ENCODE measurements at regions of chr11 and their contacts with region 1.

Region 1: DNA sequence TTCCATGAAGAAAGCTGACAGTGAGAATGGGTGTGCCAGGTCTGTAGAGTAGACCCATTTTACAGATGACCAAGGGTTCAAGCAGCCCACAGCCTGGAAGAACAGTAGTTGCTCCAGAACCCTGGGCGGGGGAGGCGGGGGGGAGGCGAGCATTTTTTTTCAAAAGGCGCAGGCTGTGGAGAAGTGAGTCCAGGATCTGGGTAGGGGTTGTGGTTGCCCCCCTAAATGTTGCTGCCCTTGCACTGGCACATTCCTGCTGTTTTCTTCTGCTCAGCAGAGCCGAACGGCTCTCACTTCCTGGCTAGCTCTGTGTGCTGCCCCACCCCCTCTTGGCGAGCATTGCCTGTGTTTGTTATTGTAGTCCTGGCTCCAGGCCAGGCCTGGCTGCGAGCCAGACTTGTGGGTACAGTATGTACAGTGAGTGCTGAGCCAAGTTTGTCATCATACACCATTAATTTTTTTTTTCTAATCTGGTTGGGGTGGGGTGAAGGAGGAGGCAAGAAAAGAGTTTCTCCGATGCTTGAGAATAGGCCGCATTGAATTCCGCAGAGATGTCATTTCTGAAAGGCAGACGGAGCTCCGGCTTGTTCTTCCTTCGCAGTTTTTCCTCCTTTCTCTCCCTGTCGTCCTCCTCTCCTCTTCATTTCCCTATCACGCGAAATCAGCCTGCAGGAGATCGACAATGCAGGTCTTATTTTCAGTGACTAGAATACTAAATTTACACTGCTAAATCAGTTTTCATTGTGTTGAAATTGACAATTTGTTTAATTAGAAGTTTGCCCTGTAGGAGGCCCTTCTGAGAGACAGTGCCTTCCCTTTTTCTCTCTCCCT is 100.5 kb downstream of the ZBTB16 start:
- DNase-seq: peak; percentile 100
- H3K4me3 ChIP-seq: peak overlapping the region; percentile 32 to 49 (median 42)
- H3K27ac ChIP-seq: peak overlapping the region; percentile 97 to 100 (median 98)
- H3K4me1 ChIP-seq: peaks cover 91 to 97% (median 96%) of the 10 kb centered on the region in 4 donors
- H3K27me3 ChIP-seq: no peaks in the 10 kb centered on the region
- CTCF ChIP-seq: no peak
- EP300 ChIP-seq: peak; percentile 99
- POLR2A ChIP-seq: no peak

Region 2: GRCh38 chr11:114110952-114111947 is 48.8 kb before region 1 on chr11:
- intact Hi-C with region 1: no loop called
- DNase-seq: no peak
- H3K4me3 ChIP-seq: peak overlapping the region in 2 of 4 donors; percentile 6
- H3K27ac ChIP-seq: peak overlapping the region; percentile 46 to 63 (median 55)
- H3K4me1 ChIP-seq: peaks cover 97 to 100% (median 99%) of the 10 kb centered on the region in 4 donors
- H3K27me3 ChIP-seq: no peaks in the 10 kb centered on the region
- CTCF ChIP-seq: no peak
- EP300 ChIP-seq: no peak
- POLR2A ChIP-seq: no peak

Region 3: DNA sequence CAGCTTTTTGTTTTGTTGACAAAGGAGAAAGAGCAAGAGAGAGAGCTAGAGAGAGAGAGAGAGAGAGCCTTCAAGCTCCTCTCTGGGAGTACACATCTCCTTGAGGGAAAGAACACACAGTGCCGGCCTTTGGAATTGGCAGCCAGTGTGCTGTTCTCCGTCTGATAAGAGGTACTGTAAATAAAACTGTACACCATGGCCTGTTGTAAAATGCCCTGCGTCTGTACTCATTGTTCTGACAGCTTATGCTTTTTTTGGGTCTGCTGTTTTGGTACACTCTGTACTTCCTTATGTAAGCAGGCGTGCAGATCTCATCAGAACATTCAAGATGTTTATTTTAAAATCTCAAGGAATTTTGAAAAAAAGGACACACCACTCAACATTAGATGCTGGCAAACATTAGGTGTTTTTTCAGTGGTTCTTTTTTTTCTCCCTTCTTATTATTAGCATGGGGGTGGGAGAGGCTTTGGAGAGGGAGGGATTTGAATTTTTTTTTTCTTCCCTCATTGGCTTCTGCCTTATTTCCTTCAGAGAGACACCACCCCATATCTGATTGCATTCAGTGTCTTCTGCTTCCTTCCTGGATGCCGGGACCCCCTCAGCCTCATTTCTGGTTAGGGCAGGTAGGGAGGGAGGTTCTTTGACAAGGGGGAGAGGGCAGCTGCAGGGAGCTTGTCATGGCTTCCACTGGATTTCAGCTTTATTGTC is 19.4 kb after region 1 on chr11:
- intact Hi-C with region 1: loop called (anchors 2 kb)
- DNase-seq: peak; percentile 96
- H3K4me3 ChIP-seq: peak overlapping the region; percentile 45 to 53 (median 50)
- H3K27ac ChIP-seq: peak overlapping the region; percentile 97 to 100 (median 98)
- H3K4me1 ChIP-seq: peaks cover 92 to 98% (median 96%) of the 10 kb centered on the region in 4 donors
- H3K27me3 ChIP-seq: no peaks in the 10 kb centered on the region
- CTCF ChIP-seq: no peak
- EP300 ChIP-seq: peak; percentile 100
- POLR2A ChIP-seq: peak; percentile 60

Region 4: GRCh38 chr11:114651145-114651718 is 491.2 kb after region 1 on chr11:
- intact Hi-C with region 1: no loop called
- DNase-seq: no peak
- H3K4me3 ChIP-seq: no peak overlapping the region
- H3K27ac ChIP-seq: no peak overlapping the region
- H3K4me1 ChIP-seq: no peaks in the 10 kb centered on the region
- H3K27me3 ChIP-seq: no peaks in the 10 kb centered on the region
- CTCF ChIP-seq: no peak
- EP300 ChIP-seq: no peak
- POLR2A ChIP-seq: no peak